CD8-positive, alpha-beta T cell (primary cell): ENCODE measurements at regions of chr19 and their contacts with region 1.

Region 1: DNA sequence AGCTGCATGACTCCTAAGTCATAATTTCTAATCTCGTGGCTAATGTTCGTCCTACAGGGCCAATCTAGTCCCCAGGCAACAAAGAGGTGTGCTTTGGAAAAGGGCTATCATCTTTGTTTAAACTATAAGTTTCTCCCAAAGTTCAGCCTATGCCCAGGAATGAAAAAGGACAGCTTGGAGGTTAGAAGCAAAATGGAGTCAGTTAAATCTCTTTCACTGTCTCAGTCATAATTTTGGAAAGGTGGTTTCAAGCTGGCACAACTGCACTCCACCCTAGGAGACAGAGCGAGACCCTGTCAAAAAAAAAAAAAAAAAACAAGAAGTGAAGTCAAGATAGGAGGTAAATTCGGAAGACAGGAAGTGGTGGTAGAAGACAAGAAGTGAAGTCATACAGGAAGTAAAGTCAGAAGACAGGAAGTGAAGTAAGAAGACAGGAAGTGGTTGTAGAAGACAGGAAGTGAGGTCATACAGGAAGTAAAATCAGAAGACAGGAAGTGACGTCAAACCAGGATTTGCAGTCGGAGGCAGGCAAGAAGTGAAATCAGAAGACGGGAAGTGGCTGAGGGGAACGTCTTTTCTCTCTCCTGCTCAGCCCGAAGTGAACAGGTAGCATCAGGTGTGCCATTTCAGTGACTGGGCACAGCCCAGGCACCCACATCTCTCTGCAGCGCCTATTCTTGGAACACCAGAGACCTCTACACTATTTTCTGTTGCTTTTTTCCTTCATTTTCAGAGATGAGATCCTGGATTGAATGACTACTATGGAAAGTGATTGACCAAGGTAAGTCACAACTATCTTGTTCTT is 32.2 kb downstream of the GP6 start:
- DNase-seq: peak; percentile 4 to 95 (median 54)
- ATAC-seq: peak; percentile 90
- H3K4me3 ChIP-seq: peak overlapping the region; percentile 52 to 53
- H3K4me3 Mint-ChIP-seq: peak overlapping the region; percentile 71
- H3K27ac ChIP-seq: peak overlapping the region; percentile 66 to 90
- H3K27ac Mint-ChIP-seq: peak overlapping the region; percentile 87
- H3K4me1 ChIP-seq: peaks cover 17% of the 10 kb centered on the region
- H3K4me1 Mint-ChIP-seq: peaks cover 24% of the 10 kb centered on the region
- H3K27me3 ChIP-seq: peaks cover 0 to 2% of the 10 kb centered on the region in 2 experiments
- H3K27me3 Mint-ChIP-seq: peaks cover 25% of the 10 kb centered on the region
- CTCF ChIP-seq: no peak

Region 2: GRCh38 chr19:54502518-54503048 is 503.3 kb before region 1 on chr19 and contains the start of gene LAIR2:
- CTCF ChIA-PET with region 1: no interaction called
- POLR2A ChIA-PET with region 1: no interaction called
- intact Hi-C with region 1: no loop called
- DNase-seq: peak in 2 of 9 experiments; percentile 50 to 63
- ATAC-seq: no peak
- H3K4me3 ChIP-seq: peak within 1 kb of the TSS in 1 of 2 experiments; percentile 35
- H3K4me3 Mint-ChIP-seq: no peak within 1 kb of the TSS
- H3K27ac ChIP-seq: no peak within 1 kb of the TSS
- H3K27ac Mint-ChIP-seq: no peak within 1 kb of the TSS
- H3K4me1 ChIP-seq: peaks cover 8% of the 10 kb centered on the region
- H3K4me1 Mint-ChIP-seq: peaks cover 13% of the 10 kb centered on the region
- H3K27me3 ChIP-seq: no peaks in the 10 kb centered on the region
- H3K27me3 Mint-ChIP-seq: peaks cover 34% of the 10 kb centered on the region
- CTCF ChIP-seq: no peak
- total RNA-seq, gene LAIR2: not detected

Region 3: GRCh38 chr19:54959840-54960239 is 46.0 kb before region 1 on chr19:
- CTCF ChIA-PET with region 1: no interaction called
- POLR2A ChIA-PET with region 1: no interaction called
- intact Hi-C with region 1: no loop called
- DNase-seq: no peak
- ATAC-seq: no peak
- H3K4me3 ChIP-seq: no peak overlapping the region
- H3K4me3 Mint-ChIP-seq: no peak overlapping the region
- H3K27ac ChIP-seq: no peak overlapping the region
- H3K27ac Mint-ChIP-seq: no peak overlapping the region
- H3K4me1 ChIP-seq: peaks cover 7% of the 10 kb centered on the region
- H3K4me1 Mint-ChIP-seq: peaks cover 3% of the 10 kb centered on the region
- H3K27me3 ChIP-seq: no peaks in the 10 kb centered on the region
- H3K27me3 Mint-ChIP-seq: peaks cover 6% of the 10 kb centered on the region
- CTCF ChIP-seq: no peak

Region 4: DNA sequence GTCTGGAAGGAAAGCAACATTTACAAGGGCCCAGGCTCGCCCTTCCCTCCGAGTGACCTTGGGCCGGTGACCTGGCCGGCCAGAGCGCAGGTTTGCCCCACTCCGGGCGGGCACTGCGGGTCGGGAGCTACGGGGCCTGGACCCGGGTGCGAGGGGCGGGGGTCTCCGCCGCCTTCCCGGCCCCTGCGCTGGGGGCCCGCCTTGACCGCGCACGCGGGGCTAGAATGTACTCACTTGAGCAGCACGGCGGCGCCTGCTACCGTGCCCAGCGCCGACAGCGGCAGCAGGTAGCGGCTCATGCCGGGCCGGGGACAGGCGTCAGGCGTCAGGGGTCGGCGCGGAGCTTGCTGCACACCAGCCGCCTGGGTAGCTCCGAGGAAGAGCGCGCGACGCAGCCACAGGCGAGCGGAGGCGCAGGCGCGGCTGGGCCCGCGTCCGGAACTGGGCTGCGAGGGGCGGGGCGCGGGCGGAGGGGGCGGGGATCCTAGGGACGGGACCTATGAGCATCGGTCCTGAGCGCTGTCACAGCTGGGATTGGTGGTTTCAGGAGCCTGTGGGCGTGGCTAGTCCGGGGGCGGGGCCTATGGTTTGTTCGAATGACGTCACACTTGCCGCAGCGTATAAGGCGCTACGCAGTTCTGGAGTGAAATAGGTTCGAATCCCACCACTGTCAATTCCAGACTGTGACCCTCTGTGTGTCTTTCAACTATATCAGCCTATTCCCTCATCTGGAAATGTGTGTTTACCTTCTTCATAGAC is 57.0 kb after region 1 on chr19 and contains the start of gene RDH13:
- CTCF ChIA-PET with region 1: no interaction called
- POLR2A ChIA-PET with region 1: no interaction called
- intact Hi-C with region 1: loop called (anchors 1 to 2 kb)
- DNase-seq: peak; percentile 96 to 99 (median 97)
- ATAC-seq: peak; percentile 99
- H3K4me3 ChIP-seq: peak within 1 kb of the TSS; percentile 60 to 87
- H3K4me3 Mint-ChIP-seq: peak within 1 kb of the TSS; percentile 85
- H3K27ac ChIP-seq: peak within 1 kb of the TSS; percentile 62 to 67
- H3K27ac Mint-ChIP-seq: peak within 1 kb of the TSS; percentile 69
- H3K4me1 ChIP-seq: peaks cover 8% of the 10 kb centered on the region
- H3K4me1 Mint-ChIP-seq: peaks cover 25% of the 10 kb centered on the region
- H3K27me3 ChIP-seq: peaks cover 3 to 10% of the 10 kb centered on the region in 2 experiments
- H3K27me3 Mint-ChIP-seq: peaks cover 14% of the 10 kb centered on the region
- CTCF ChIP-seq: no peak
- total RNA-seq, gene RDH13: 12.4 to 13.4 TPM